ENCODE measurements at regions of chr9 and their contacts with region 1.

Region 1: GRCh38 chr9:75213765-75214164 is 125.5 kb downstream of the OSTF1 start:
- DNase-seq: no peak
- ATAC-seq: no peak
- H3K4me3 ChIP-seq: no peak overlapping the region
- H3K4me3 Mint-ChIP-seq: no peak overlapping the region
- H3K27ac ChIP-seq: no peak overlapping the region
- H3K27ac Mint-ChIP-seq: no peak overlapping the region
- H3K4me1 ChIP-seq: no peaks in the 10 kb centered on the region
- H3K4me1 Mint-ChIP-seq: no peaks in the 10 kb centered on the region
- H3K27me3 ChIP-seq: no peaks in the 10 kb centered on the region
- H3K27me3 Mint-ChIP-seq: no peaks in the 10 kb centered on the region
- CTCF ChIP-seq: no peak

Region 2: DNA sequence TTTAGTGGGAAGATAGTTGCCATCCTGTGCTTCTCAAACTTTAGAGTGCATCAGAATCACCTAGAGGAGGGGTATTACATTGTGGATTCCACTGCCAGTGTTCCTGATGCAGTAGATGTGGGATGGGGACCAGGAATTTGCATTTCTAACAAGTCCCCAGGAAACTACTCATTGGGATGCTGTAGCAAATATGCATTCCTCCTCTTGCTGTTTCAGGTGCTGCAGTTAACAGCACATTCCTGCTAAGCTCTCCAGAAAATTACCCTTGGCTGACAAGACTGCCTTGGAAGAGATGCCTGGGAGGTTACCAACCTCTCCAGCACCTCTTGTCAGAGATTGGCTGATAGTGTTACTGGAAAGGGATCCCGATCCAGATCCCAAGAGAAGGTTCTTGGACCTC is 145.1 kb after region 1 on chr9:
- CTCF ChIA-PET with region 1: no interaction called
- POLR2A ChIA-PET with region 1: no interaction called
- intact Hi-C with region 1: no loop called
- DNase-seq: no peak
- ATAC-seq: no peak
- H3K4me3 ChIP-seq: no peak overlapping the region
- H3K4me3 Mint-ChIP-seq: no peak overlapping the region
- H3K27ac ChIP-seq: no peak overlapping the region
- H3K27ac Mint-ChIP-seq: no peak overlapping the region
- H3K4me1 ChIP-seq: no peaks in the 10 kb centered on the region
- H3K4me1 Mint-ChIP-seq: no peaks in the 10 kb centered on the region
- H3K27me3 ChIP-seq: no peaks in the 10 kb centered on the region
- H3K27me3 Mint-ChIP-seq: no peaks in the 10 kb centered on the region
- CTCF ChIP-seq: no peak

Region 3: DNA sequence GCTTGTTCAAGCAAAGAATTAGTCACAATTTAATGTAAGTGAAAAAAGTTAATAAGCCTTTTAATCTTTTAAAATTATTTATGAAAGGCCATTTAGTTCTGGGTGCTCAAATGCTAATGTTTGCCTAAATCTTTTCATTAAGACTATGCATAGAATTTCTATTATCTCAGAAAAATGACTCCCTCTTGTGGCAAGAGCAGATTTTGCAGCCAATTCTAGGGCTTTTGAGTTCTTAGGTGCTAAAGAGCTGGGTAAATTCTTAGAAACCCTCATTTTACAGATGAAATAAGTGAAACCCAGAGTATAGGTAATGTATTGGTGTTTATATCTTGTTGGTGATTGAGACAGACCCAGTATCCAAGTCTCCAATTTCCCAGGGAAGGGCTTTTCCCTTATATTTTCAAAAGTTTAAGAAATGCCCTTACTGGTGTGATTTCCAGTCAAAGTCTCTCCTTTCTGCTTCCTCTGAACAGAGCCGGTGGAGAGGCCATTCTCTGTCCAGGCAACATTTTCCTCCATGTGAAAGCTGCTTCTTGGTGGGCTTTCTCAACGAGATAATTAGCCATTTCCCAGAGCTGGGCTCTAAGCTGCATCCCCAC is 652.6 kb after region 1 on chr9:
- CTCF ChIA-PET with region 1: no interaction called
- POLR2A ChIA-PET with region 1: no interaction called
- intact Hi-C with region 1: loop called in 1 of 2 experiments (anchors 10 kb)
- DNase-seq: peak in 10 of 14 experiments; percentile 7 to 67 (median 31)
- ATAC-seq: no peak
- H3K4me3 ChIP-seq: no peak overlapping the region
- H3K4me3 Mint-ChIP-seq: no peak overlapping the region
- H3K27ac ChIP-seq: no peak overlapping the region
- H3K27ac Mint-ChIP-seq: no peak overlapping the region
- H3K4me1 ChIP-seq: no peaks in the 10 kb centered on the region
- H3K4me1 Mint-ChIP-seq: peaks cover 19% of the 10 kb centered on the region
- H3K27me3 ChIP-seq: no peaks in the 10 kb centered on the region
- H3K27me3 Mint-ChIP-seq: no peaks in the 10 kb centered on the region
- CTCF ChIP-seq: peak; percentile 83